ENCODE measurements at regions of chr16 and their contacts with region 1.

Region 1: DNA sequence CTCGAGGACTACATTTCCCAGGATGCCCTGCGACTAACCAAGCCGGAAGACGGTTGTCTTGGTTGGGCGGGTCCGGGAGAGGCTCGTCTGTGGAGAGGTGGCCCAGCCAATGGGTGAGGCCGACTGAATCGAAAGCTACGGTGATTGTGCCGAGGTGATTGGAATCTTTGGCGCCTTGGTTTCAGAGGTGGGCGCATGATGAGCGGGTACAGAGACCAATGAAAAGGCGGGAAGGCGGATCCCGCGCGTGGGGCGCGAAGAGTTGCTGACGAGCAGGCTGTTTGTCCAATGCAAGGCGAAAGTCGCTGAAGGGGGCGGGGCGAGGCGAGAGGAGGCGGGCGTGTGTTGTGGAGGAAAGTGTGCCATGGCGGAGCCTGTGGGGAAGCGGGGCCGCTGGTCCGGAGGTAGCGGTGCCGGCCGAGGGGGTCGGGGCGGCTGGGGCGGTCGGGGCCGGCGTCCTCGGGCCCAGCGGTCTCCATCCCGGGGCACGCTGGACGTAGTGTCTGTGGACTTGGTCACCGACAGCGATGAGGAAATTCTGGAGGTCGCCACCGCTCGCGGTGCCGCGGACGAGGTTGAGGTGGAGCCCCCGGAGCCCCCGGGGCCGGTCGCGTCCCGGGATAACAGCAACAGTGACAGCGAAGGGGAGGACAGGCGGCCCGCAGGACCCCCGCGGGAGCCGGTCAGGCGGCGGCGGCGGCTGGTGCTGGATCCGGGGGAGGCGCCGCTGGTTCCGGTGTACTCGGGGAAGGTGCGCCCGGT is at the start of gene NFATC2IP:
- DNase-seq: peak; percentile 99 to 100 (median 100)

Region 2: DNA sequence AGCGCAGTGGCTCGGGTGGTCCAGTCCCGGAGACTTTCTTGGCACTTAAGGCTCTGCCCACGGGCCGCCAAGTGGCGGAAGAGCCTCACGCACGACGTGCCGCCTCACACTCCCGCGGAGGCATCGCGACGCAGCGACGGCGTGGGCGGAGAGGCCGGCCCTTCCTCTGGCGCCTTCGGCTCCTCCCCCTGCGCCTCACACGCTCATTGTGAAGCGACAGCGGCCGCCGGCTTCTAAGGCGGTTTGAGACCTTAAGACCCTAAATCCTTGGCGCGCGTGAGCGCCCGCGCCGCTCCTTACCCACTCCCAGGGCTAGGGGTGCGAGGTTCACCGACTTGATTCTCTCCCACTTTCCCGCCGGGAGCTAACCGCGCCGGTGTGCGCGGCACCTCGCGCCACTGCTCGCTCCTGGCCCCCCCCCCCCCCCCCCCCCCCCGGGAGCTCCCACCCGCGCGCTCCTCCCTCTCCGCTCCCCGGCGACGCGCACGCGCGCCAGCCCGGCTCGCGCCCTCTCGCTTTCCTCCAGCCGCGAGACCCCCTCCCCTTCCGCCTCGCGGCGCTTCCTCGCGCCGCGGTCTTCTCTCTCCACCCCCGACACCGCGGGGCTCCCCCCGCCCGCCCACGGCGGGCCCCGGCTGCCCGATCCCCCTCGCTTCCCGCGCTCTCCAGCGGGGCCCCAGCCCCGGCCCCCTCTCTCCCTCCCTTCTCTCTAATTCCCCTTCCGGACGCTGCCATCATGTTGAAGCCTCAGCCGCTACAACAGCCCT is 128.1 kb before region 1 on chr16 and contains the start of gene ATXN2L:
- intact Hi-C with region 1: no loop called
- DNase-seq: peak; percentile 80 to 97 (median 94)

Region 3: GRCh38 chr16:28863929-28864793 is 86.7 kb before region 1 on chr16:
- intact Hi-C with region 1: loop called (anchors 5 kb)
- DNase-seq: peak in 7 of 42 donors; percentile 6 to 44 (median 21)

Region 4: DNA sequence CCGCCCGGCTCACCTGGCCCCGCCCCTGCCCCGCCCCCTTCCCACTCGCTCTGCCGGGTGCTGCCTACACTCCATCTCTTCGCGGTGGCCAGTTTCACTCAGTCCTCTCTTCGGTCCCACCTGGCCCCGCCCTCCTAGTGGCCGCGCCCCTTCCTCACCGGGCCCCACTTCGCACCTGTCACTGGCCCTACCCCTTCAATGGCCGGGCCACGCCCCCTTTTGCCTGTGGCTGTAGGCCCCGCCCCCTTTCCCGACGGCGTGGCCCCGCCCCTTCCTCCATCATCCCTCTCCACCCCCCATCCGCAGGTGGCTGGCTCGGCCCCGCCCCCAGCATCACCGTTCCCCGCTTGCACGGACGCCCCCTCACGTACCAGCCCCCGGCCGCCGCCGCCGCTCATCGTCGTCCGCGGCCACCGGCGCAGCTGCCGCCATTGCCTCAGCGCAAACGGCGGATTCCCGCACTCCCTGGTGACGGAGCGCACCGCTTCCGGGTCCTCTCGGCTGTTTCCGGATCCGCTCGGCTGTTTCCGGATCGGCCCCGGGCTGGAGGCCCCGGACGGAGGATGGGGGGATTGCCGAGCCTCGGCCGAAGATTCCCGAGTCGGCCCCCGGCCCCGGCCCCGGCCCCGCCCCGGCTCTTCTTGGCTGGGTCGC is 26.0 kb before region 1 on chr16 and contains the start of gene RABEP2:
- intact Hi-C with region 1: loop called (anchors 2 kb)
- DNase-seq: peak; percentile 72 to 96 (median 91)